ENCODE measurements at regions of chr10 and their contacts with region 1.

Region 1: GRCh38 chr10:86971232-86971991 is 3.1 kb downstream of the ADIRF start:
- DNase-seq: peak; percentile 93 to 97
- ATAC-seq: peak; percentile 91
- H3K4me3 ChIP-seq: peak overlapping the region; percentile 1 to 64
- H3K27ac ChIP-seq: peak overlapping the region; percentile 39 to 87
- H3K4me1 ChIP-seq: no peaks in the 10 kb centered on the region
- H3K27me3 ChIP-seq: no peaks in the 10 kb centered on the region

Region 2: DNA sequence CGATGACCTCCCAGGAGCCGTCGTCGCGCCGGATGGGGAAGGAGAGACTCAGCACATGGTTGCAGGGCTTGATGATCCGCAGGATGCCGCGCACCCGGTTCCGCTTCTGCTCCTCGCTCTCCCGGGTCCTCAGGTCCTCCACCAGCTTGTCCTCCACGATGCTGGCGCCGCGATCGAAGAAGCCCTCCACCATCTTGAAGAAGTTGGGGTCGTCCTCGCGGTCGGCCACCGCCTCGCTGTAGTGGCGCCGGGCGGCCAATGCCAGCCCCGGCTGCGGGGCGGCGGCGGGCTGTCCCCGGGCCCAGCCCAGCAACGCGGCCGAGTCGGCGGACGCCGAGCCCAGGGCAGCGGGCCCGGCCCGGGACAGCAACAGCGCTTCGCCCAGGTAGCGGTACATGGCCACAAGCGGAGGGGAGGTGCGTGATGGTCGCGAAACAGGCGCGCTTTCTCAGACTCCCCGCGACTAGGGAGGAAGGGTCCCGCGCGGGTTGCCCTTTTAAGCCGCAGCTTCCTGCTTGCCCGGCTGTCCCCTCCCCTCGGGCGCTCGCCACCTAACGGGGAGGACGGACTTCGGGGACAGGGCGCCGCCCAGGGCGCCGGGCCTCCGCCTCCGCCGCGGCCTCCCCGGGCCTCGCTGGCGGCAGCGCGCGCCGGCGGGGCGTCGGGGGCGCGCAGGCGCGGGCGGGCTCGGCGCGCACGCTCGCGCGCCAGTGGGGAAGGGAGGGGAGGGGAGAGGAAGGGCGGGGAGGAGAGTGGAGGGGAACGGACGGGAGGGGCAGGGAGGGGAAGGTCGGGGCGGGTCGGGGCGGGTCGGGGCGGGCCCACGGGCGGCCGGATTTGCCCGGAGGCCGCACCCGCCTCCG is 123.2 kb after region 1 on chr10 and contains the starts of genes GLUD1 and SHLD2:
- intact Hi-C with region 1: loop called in 1 of 2 experiments (anchors 2 kb)
- DNase-seq: peak; percentile 97
- ATAC-seq: peak; percentile 92
- H3K4me3 ChIP-seq: peak within 1 kb of the TSS; percentile 72 to 88
- H3K27ac ChIP-seq: peak within 1 kb of the TSS; percentile 79 to 91
- H3K4me1 ChIP-seq: peaks cover 0 to 1% of the 10 kb centered on the region in 2 donors
- H3K27me3 ChIP-seq: no peaks in the 10 kb centered on the region
- total RNA-seq, gene GLUD1: 107 to 118 TPM
- total RNA-seq, gene SHLD2: 18.7 to 24.2 TPM